PC-3 (cell line): ENCODE measurements at regions of chr12 and their contacts with region 1.

Region 1: GRCh38 chr12:110750784-110751461 is 8.2 kb upstream of the PPP1CC start:
- DNase-seq: no peak
- ATAC-seq: no peak
- H3K4me3 ChIP-seq: no peak overlapping the region
- H3K27ac ChIP-seq: no peak overlapping the region
- H3K4me1 ChIP-seq: no peaks in the 10 kb centered on the region
- H3K27me3 ChIP-seq: no peaks in the 10 kb centered on the region
- CTCF ChIP-seq: no peak

Region 2: GRCh38 chr12:110718222-110718908 is 32.6 kb before region 1 on chr12:
- CTCF ChIA-PET with region 1: no interaction called
- POLR2A ChIA-PET with region 1: interaction called, 14 read pairs
- intact Hi-C with region 1: no loop called
- DNase-seq: no peak
- ATAC-seq: no peak
- H3K4me3 ChIP-seq: no peak overlapping the region
- H3K27ac ChIP-seq: no peak overlapping the region
- H3K4me1 ChIP-seq: no peaks in the 10 kb centered on the region
- H3K27me3 ChIP-seq: no peaks in the 10 kb centered on the region
- CTCF ChIP-seq: no peak